ENCODE measurements at regions of chr1 and their contacts with region 1.

Region 1: DNA sequence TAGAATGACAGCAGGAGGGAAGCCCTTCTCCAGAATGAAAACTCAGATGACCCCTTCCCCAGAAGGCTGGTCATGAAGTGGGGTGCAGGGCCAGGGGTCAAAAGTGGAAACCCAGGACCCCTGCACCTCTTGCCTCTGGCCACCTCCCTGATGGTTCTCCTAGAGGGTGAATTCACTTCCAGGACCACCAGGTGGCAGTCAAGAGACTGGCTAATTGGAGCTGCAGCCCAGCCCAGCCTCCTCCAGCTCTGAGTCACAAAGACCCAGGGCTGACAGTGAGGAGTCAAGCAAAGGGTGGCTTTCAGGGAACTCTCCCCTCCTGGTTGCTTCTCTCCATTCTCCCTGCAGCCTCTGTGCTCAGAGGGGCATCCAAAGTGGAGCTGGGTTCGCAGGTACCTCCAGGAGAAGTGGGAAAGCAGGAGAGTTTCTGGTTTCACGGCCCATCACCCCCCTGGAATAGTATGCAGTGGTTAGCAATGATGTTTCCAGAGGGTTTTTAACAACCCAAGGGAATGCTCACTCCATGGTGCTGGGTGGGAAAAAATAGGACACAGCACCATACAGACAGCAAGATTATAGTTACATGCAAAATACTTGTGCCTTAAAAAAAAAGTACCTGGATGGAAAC is 6.1 kb upstream of the EPHB2 start:
- DNase-seq: peak; percentile 85 to 95
- H3K4me3 ChIP-seq: no peak overlapping the region
- H3K27ac ChIP-seq: no peak overlapping the region
- H3K4me1 ChIP-seq: peaks cover 0 to 11% (median 6%) of the 10 kb centered on the region in 4 donors
- H3K27me3 ChIP-seq: peaks cover 0 to 8% (median 7%) of the 10 kb centered on the region in 3 donors
- CTCF ChIP-seq: peak in 5 of 7 experiments; percentile 79 to 87 (median 82)
- EP300 ChIP-seq: no peak
- POLR2A ChIP-seq: no peak

Region 2: GRCh38 chr1:22518379-22518778 is 186.2 kb before region 1 on chr1:
- intact Hi-C with region 1: no loop called
- DNase-seq: no peak
- H3K4me3 ChIP-seq: no peak overlapping the region
- H3K27ac ChIP-seq: no peak overlapping the region
- H3K4me1 ChIP-seq: peaks cover 0 to 7% (median 0%) of the 10 kb centered on the region in 4 donors
- H3K27me3 ChIP-seq: no peaks in the 10 kb centered on the region
- CTCF ChIP-seq: no peak
- EP300 ChIP-seq: no peak
- POLR2A ChIP-seq: no peak

Region 3: GRCh38 chr1:22773981-22774832 is 69.7 kb after region 1 on chr1:
- intact Hi-C with region 1: no loop called
- DNase-seq: peak in 1 of 2 donors; percentile 87
- H3K4me3 ChIP-seq: no peak overlapping the region
- H3K27ac ChIP-seq: no peak overlapping the region
- H3K4me1 ChIP-seq: peaks cover 0 to 19% (median 5%) of the 10 kb centered on the region in 4 donors
- H3K27me3 ChIP-seq: peaks cover 0 to 28% (median 0%) of the 10 kb centered on the region in 3 donors
- CTCF ChIP-seq: no peak
- EP300 ChIP-seq: no peak
- POLR2A ChIP-seq: no peak

Region 4: GRCh38 chr1:22969304-22969709 is 264.8 kb after region 1 on chr1:
- intact Hi-C with region 1: loop called (anchors 10 kb)
- DNase-seq: peak in 1 of 2 donors; percentile 86
- H3K4me3 ChIP-seq: no peak overlapping the region
- H3K27ac ChIP-seq: no peak overlapping the region
- H3K4me1 ChIP-seq: peaks cover 0 to 12% (median 3%) of the 10 kb centered on the region in 4 donors
- H3K27me3 ChIP-seq: peaks cover 0 to 60% (median 22%) of the 10 kb centered on the region in 3 donors
- CTCF ChIP-seq: no peak
- EP300 ChIP-seq: no peak
- POLR2A ChIP-seq: no peak

Measured in stomach (tissue), 19 donors.